GM12878 (cell line): ENCODE measurements at regions of chr6 and their contacts with region 1.

Region 1: GRCh38 chr6:87078983-87079616 is 15.8 kb downstream of the CGA start:
- DNase-seq: no peak
- ATAC-seq: peak; percentile 96
- H3K4me3 ChIP-seq: no peak overlapping the region
- H3K27ac ChIP-seq: no peak overlapping the region
- H3K4me1 ChIP-seq: peaks cover 7% of the 10 kb centered on the region
- H3K27me3 ChIP-seq: no peaks in the 10 kb centered on the region
- CTCF ChIP-seq: peak; percentile 74 to 99 (median 95)
- EP300 ChIP-seq: no peak
- POLR2A ChIP-seq: no peak
- RAD21 ChIP-seq: peak; percentile 62

Region 2: DNA sequence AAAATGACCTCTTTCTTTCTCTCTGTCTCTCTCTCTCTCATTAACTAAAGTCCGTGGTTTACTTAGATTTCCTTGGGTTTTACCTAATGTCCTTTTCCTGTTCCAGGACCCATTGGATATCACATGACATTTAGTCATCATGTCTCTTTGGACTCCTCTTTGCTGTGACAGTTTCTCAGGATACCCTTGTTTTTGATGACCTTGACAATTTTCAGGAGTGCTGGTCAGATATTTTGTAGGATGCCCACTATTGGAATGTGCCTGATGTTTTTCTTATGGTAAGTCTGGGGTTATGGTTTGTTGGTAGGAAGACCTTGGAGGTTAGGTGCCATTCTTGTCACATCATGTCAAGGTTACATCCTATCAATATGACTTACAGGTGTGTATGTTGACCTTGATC is 341.0 kb before region 1 on chr6:
- CTCF ChIA-PET with region 1: no interaction called
- POLR2A ChIA-PET with region 1: no interaction called
- RAD21 ChIA-PET with region 1: no interaction called
- SMC1A ChIA-PET with region 1: no interaction called
- in situ Hi-C with region 1: no loop called
- intact Hi-C with region 1: no loop called
- DNase-seq: no peak
- ATAC-seq: no peak
- H3K4me3 ChIP-seq: no peak overlapping the region
- H3K27ac ChIP-seq: no peak overlapping the region
- H3K4me1 ChIP-seq: no peaks in the 10 kb centered on the region
- H3K27me3 ChIP-seq: no peaks in the 10 kb centered on the region
- CTCF ChIP-seq: no peak
- EP300 ChIP-seq: no peak
- POLR2A ChIP-seq: no peak
- RAD21 ChIP-seq: no peak

Region 3: GRCh38 chr6:87093651-87094050 is 14.6 kb after region 1 on chr6:
- CTCF ChIA-PET with region 1: interaction called, 32 read pairs
- POLR2A ChIA-PET with region 1: interaction called, 3 read pairs
- RAD21 ChIA-PET with region 1: no interaction called
- SMC1A ChIA-PET with region 1: no interaction called
- in situ Hi-C with region 1: no loop called
- intact Hi-C with region 1: no loop called
- DNase-seq: no peak
- ATAC-seq: no peak
- H3K4me3 ChIP-seq: no peak overlapping the region
- H3K27ac ChIP-seq: no peak overlapping the region
- H3K4me1 ChIP-seq: no peaks in the 10 kb centered on the region
- H3K27me3 ChIP-seq: no peaks in the 10 kb centered on the region
- CTCF ChIP-seq: no peak
- EP300 ChIP-seq: no peak
- POLR2A ChIP-seq: no peak
- RAD21 ChIP-seq: no peak

Region 4: DNA sequence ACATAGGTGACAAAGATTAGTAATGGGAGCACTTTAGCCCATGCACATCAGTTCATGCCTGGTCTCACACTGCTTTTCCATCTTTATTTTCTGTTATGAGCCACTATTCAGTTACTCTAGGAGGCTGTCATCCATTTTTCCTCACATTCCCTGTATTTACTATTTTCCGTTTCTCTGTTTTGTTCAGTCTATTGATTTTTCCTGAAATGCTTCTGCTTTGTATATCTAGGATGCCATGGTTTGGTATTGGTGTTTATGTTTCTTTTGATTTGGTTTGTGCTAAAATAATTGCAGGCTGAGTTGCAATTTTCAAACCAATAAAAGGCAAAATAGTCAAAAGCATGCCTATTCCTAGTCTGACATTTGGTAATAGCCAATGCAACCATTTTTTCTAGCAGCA is 47.4 kb after region 1 on chr6:
- CTCF ChIA-PET with region 1: interaction called, 10 read pairs
- POLR2A ChIA-PET with region 1: no interaction called
- RAD21 ChIA-PET with region 1: no interaction called
- SMC1A ChIA-PET with region 1: no interaction called
- in situ Hi-C with region 1: no loop called
- intact Hi-C with region 1: no loop called
- DNase-seq: no peak
- ATAC-seq: no peak
- H3K4me3 ChIP-seq: no peak overlapping the region
- H3K27ac ChIP-seq: no peak overlapping the region
- H3K4me1 ChIP-seq: no peaks in the 10 kb centered on the region
- H3K27me3 ChIP-seq: no peaks in the 10 kb centered on the region
- CTCF ChIP-seq: no peak
- EP300 ChIP-seq: no peak
- POLR2A ChIP-seq: no peak
- RAD21 ChIP-seq: no peak

Region 5: DNA sequence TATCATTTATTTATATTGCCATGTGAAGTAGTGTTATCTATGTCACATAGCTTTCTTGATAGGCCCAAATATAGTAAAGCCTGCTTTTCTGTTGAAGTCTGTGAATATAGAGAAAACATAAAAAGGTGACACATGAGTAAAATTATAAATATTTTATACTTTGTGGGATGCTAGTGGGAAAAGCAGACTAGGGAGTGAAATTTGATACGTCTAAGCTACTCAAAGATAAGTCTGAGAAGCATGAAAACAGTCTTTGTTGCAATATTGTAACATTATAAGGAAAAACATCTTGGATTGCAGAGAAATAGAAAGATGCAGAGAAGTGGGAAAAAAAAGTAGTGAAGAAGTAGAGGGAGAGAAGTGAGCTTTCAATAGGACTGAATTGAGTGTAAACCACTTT is 151.7 kb after region 1 on chr6:
- CTCF ChIA-PET with region 1: interaction called, 6 read pairs
- POLR2A ChIA-PET with region 1: no interaction called
- RAD21 ChIA-PET with region 1: no interaction called
- SMC1A ChIA-PET with region 1: no interaction called
- in situ Hi-C with region 1: no loop called
- intact Hi-C with region 1: loop called (anchors 5 kb)
- DNase-seq: no peak
- ATAC-seq: no peak
- H3K4me3 ChIP-seq: no peak overlapping the region
- H3K27ac ChIP-seq: no peak overlapping the region
- H3K4me1 ChIP-seq: no peaks in the 10 kb centered on the region
- H3K27me3 ChIP-seq: no peaks in the 10 kb centered on the region
- CTCF ChIP-seq: no peak
- EP300 ChIP-seq: no peak
- POLR2A ChIP-seq: no peak
- RAD21 ChIP-seq: no peak